Common myeloid progenitor, CD34-positive (primary cell): ENCODE measurements at regions of chr14 and their contacts with region 1.

Region 1: GRCh38 chr14:56339855-56340701 is 221.9 kb downstream of the PELI2 start:
- DNase-seq: peak; percentile 93 to 97 (median 96)
- H3K4me3 ChIP-seq: peak overlapping the region in 1 of 7 experiments; percentile 45
- H3K27ac ChIP-seq: peak overlapping the region in 1 of 2 experiments; percentile 50
- H3K4me1 ChIP-seq: peaks cover 14 to 48% (median 43%) of the 10 kb centered on the region in 4 experiments
- H3K27me3 ChIP-seq: no peaks in the 10 kb centered on the region

Region 2: DNA sequence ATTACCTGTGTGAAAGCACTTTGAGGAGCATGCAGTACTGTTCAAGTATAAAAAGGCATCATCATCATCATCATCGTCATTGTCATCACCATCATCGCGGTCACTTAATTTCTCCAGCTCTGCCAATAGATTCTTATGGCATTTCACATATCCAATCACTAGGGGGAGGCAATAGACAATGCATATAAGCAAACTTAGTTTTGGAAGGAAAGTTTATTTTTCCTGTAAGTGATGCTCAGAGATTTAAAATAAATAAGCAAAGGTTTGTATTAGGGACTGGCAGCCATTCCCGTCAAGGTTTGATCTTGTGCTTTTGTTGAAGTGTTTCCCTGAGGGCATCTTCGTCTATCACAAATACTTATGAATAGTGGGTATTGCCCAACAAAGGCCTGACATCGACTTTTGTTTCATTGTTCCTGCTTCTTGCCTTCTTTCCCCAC is 632.7 kb before region 1 on chr14:
- CTCF ChIA-PET with region 1: interaction called, 15 read pairs
- POLR2A ChIA-PET with region 1: no interaction called
- DNase-seq: peak; percentile 40 to 66 (median 65)
- H3K4me3 ChIP-seq: no peak overlapping the region
- H3K27ac ChIP-seq: no peak overlapping the region
- H3K4me1 ChIP-seq: no peaks in the 10 kb centered on the region
- H3K27me3 ChIP-seq: no peaks in the 10 kb centered on the region

Region 3: GRCh38 chr14:55843718-55844403 is 496.2 kb before region 1 on chr14:
- CTCF ChIA-PET with region 1: interaction called, 12 read pairs
- POLR2A ChIA-PET with region 1: no interaction called
- DNase-seq: peak; percentile 10 to 46 (median 42)
- H3K4me3 ChIP-seq: no peak overlapping the region
- H3K27ac ChIP-seq: no peak overlapping the region
- H3K4me1 ChIP-seq: no peaks in the 10 kb centered on the region
- H3K27me3 ChIP-seq: peaks cover 0 to 3% (median 0%) of the 10 kb centered on the region in 5 experiments

Region 4: GRCh38 chr14:56087671-56088471 is 252.2 kb before region 1 on chr14:
- CTCF ChIA-PET with region 1: no interaction called
- POLR2A ChIA-PET with region 1: no interaction called
- DNase-seq: peak in 2 of 3 donors; percentile 41 to 66
- H3K4me3 ChIP-seq: no peak overlapping the region
- H3K27ac ChIP-seq: no peak overlapping the region
- H3K4me1 ChIP-seq: peaks cover 0 to 13% (median 5%) of the 10 kb centered on the region in 4 experiments
- H3K27me3 ChIP-seq: no peaks in the 10 kb centered on the region

Region 5: GRCh38 chr14:56358851-56359614 is 19.0 kb after region 1 on chr14:
- CTCF ChIA-PET with region 1: interaction called, 40 read pairs
- POLR2A ChIA-PET with region 1: interaction called, 6 read pairs
- DNase-seq: peak; percentile 57 to 95 (median 87)
- H3K4me3 ChIP-seq: peak overlapping the region in 1 of 7 experiments; percentile 52
- H3K27ac ChIP-seq: no peak overlapping the region
- H3K4me1 ChIP-seq: peaks cover 13 to 33% (median 25%) of the 10 kb centered on the region in 4 experiments
- H3K27me3 ChIP-seq: no peaks in the 10 kb centered on the region

Region 6: DNA sequence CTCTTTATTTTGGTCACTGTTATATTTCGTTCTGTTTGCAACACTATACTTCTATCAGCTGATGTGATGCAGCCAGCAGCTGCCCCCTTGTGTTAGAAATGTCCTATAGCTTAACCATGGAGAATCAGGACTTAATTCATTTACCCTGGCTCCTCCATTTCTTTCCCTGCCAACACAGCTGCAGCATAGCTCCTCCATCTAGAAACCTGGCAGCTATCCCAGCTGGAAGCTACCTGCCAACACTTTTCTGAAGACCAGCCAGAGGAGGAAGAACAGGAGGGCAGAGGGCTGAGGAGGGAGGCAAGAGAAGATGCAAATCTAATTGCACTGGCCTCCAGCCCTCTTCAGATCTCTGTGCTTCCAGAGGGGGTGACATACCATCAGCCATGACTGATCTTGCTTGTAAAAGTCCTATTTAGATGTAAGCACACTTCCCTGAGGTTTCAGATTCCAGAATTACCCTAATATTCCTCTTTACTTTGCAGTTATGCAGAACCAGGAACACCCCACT is 82.7 kb after region 1 on chr14:
- CTCF ChIA-PET with region 1: interaction called, 11 read pairs
- POLR2A ChIA-PET with region 1: interaction called, 5 read pairs
- DNase-seq: peak; percentile 64 to 79 (median 78)
- H3K4me3 ChIP-seq: no peak overlapping the region
- H3K27ac ChIP-seq: no peak overlapping the region
- H3K4me1 ChIP-seq: peaks cover 9 to 37% (median 24%) of the 10 kb centered on the region in 4 experiments
- H3K27me3 ChIP-seq: no peaks in the 10 kb centered on the region

Region 7: DNA sequence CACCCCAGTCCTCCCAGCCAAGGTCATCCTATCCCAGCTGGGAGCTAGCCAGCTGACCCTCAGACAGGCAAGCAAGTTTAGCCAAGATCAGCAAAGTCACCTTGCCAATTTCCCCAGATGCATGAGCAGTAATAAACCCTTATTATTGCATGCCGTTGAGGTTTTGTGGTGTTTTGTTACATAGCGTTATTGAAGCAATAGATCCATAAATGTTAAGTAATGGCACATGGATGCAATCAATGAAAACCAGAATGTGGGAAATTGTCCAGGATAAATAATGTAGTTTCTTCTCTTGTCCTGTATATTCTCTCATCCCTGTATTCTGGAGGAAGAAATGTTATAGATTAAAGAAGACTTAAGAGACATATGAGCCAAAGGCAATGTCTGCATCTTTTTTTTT is 221.5 kb after region 1 on chr14:
- CTCF ChIA-PET with region 1: no interaction called
- POLR2A ChIA-PET with region 1: no interaction called
- DNase-seq: no peak
- H3K4me3 ChIP-seq: no peak overlapping the region
- H3K27ac ChIP-seq: no peak overlapping the region
- H3K4me1 ChIP-seq: no peaks in the 10 kb centered on the region
- H3K27me3 ChIP-seq: peaks cover 0 to 8% (median 5%) of the 10 kb centered on the region in 5 experiments